ENCODE measurements at regions of chr22 and their contacts with region 1.

Region 1: DNA sequence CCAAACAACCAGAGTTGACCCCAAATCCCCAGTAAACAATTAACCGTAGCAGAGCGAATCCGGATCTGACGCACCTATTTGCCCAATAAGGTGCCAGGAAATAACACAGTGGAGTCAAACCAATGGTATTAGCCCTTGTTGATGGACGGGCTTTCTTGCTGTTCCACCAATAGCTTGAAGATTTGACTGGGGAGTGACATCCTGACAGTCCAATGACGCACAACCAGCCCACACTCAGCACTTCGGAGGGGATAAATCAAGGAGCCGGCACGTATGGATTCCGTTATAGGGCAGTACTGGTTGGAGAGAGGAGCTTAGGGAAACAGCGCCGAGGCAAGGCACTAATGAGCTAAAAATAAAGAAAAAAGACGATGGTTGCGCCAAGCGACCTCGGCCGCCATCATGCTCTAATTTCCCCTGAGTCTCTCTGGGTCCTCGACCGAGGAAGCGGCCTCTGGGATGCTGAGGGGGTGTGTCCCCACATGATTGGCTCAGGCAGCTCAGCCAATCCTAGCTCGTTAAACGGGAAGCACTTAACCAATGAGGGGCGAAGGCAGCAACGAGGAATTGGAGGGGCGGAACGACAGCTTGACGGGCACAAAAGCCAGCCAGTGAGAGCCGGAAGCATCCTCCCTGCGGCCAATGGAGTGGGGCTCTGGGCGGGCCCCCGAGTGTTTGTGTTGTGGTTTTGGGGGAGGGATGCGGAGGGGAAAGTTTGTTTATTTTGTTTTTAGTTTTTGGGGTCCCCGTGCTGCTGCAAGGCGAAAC is 49.5 kb downstream of the FAM83F start:
- DNase-seq: peak; percentile 94
- ATAC-seq: peak; percentile 95
- H3K4me3 ChIP-seq: peak overlapping the region; percentile 64 to 86
- H3K27ac ChIP-seq: peak overlapping the region; percentile 95
- H3K4me1 ChIP-seq: peaks cover 9% of the 10 kb centered on the region
- H3K27me3 ChIP-seq: no peaks in the 10 kb centered on the region
- CTCF ChIP-seq: no peak

Region 2: GRCh38 chr22:39343259-39344048 is 700.8 kb before region 1 on chr22:
- CTCF ChIA-PET with region 1: no interaction called
- POLR2A ChIA-PET with region 1: interaction called, 12 read pairs
- in situ Hi-C with region 1: no loop called
- intact Hi-C with region 1: no loop called
- DNase-seq: peak; percentile 32
- ATAC-seq: peak; percentile 92
- H3K4me3 ChIP-seq: no peak overlapping the region
- H3K27ac ChIP-seq: no peak overlapping the region
- H3K4me1 ChIP-seq: no peaks in the 10 kb centered on the region
- H3K27me3 ChIP-seq: no peaks in the 10 kb centered on the region
- CTCF ChIP-seq: peak; percentile 82

Region 3: DNA sequence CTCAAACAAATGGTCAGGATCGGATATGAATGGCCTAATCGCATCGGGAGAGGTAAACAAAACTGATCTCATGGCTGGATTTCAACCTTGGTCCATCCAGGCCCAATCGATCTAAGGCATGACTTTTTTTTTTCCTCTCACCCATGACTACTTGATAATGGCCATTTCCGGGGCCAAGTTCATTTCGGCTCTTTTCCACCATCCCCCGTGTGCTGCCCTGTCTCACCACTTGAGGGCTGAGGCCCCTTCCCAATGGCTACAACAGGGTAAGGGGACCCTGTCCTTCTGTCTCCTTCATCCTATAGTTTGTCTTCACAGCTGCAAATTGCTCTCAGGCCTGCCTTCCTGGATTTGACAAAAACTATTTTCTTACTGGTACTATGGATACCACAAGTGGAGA is 116.7 kb before region 1 on chr22:
- CTCF ChIA-PET with region 1: no interaction called
- POLR2A ChIA-PET with region 1: no interaction called
- in situ Hi-C with region 1: no loop called
- intact Hi-C with region 1: no loop called
- DNase-seq: no peak
- ATAC-seq: no peak
- H3K4me3 ChIP-seq: no peak overlapping the region
- H3K27ac ChIP-seq: no peak overlapping the region
- H3K4me1 ChIP-seq: no peaks in the 10 kb centered on the region
- H3K27me3 ChIP-seq: peaks cover 6% of the 10 kb centered on the region
- CTCF ChIP-seq: no peak

Region 4: DNA sequence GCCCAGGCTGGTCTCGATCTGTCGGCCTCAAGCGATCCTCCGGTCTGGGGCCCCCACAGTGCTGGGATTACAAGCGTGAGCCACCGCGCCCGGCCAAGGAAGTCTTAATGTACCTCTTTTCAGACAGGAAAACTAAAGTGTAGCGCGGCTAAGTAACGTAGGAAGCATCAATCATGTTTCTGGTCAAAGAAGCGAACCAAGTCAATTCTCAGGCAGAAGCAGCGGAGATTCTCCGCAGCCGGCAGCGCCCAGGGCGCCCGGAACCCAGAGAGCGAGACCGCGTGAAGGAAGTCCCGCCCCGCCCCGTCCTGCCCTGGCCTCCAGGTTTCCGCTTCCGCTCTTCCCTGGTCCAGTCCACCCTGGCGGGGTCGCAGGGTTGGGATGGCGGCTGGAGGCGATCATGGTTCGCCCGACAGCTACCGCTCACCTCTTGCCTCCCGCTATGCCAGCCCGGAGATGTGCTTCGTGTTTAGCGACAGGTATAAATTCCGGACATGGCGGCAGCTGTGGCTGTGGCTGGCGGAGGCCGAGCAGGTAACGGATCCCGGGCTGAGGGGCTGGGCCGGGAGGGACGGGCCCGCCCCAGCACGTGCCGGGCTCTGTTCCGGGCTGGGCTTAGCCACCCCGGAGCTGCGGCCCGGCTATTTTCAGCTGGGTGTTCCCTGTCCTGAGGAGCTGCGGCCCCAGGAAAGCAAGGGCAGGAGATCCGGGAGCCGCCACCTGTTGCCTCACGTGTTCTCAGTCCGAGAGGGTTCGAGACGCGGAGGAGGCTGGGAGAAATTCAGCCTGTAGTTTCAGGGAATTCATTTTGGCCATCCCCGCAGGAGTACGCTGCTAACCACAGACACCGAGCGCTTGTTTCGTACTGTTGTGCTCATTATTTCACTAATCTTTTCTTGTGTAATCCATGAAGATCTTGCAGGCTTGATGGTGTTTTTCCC is 302.2 kb after region 1 on chr22 and contains the start of gene ADSL:
- CTCF ChIA-PET with region 1: no interaction called
- POLR2A ChIA-PET with region 1: no interaction called
- in situ Hi-C with region 1: no loop called
- intact Hi-C with region 1: loop called (anchors 5 kb)
- DNase-seq: peak; percentile 36
- ATAC-seq: peak; percentile 99
- H3K4me3 ChIP-seq: peak within 1 kb of the TSS; percentile 85 to 96
- H3K27ac ChIP-seq: peak within 1 kb of the TSS; percentile 96
- H3K4me1 ChIP-seq: peaks cover 8% of the 10 kb centered on the region
- H3K27me3 ChIP-seq: no peaks in the 10 kb centered on the region
- CTCF ChIP-seq: no peak
- total RNA-seq, gene ADSL: 107 TPM

Measured in Panc1 (cell line).